GM18951 (cell line): ENCODE measurements at regions of chr17 and their contacts with region 1.

Region 1: DNA sequence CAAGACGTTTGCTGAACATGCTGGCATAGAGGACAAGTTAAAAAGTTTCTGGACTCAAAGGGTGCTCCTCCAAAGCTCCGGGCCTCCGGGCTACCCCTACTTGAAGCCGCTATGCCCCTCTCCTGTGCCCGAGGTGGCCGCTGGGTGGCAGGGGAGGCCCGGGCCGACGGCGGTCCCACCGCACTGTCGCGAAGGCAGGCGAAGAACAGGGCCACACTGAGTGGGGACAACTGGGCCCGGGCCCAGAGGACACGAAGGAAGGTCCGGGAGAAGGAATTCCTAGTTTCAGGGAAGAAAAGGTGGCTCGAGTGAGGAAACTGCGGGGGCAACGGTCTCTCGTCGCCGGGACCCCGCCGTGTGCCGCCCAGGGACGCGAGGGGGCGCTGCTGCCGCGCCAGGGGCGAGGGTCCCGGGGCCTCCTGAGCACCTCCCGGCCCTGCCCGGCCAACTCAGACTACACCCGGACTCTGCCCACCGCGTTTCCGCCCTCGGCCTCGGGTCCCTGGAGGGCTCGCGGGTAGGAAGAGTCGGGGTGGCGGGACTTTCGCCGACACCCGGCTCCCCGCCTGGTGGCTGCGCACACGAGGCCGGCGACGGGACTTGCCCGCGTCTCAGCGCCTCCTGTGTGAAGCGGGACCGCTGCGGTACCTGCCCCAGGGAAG is 885 bp upstream of the CHCT1 start:
- POLR2A ChIP-seq: no peak

Region 2: DNA sequence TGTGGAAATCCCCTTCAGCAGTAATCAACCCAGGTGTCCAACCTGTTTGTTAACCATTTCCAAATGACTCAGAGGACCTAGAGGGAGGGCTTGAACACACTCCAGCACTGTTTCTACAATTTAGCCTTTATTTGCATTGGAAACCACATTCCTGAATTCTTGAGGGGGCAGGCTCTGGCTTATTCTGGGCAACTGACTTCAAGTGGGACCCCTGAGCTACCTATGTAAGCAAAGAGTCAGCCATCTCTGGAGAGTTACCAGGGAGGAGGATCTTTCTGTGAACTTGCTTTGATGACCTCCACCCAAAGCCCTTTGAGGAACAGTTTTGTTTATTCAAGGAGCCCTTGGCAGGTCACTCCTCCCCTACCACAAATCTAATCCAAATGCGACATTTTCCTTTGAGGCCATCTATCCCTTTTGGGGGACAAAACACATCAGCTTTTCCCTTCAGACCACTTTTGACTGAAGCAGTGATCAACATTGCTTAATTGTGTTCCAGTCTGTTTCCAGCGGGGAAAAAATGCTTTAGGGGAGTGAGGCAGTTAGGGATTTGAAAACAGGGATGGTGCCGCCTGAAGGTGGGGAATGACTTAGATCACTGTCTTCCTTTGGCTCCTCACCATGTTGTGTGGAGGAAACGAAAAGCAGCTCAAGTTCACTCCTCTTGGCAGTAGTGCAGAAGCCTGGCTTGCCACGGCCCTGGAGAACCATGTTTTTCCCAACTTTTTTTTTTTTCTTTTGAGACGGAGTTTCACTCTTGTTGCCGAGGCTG is 574.8 kb before region 1 on chr17:
- in situ Hi-C with region 1: no loop called
- POLR2A ChIP-seq: peak; percentile 38

Region 3: GRCh38 chr17:60135151-60135950 is 286.1 kb before region 1 on chr17:
- in situ Hi-C with region 1: loop called (anchors 25 kb)
- POLR2A ChIP-seq: peak; percentile 66

Region 4: GRCh38 chr17:60598001-60598736 is 176.8 kb after region 1 on chr17:
- in situ Hi-C with region 1: no loop called
- POLR2A ChIP-seq: no peak